ENCODE measurements at regions of chr5 and their contacts with region 1.

Region 1: GRCh38 chr5:99032234-99033013 is 103.6 kb upstream of the CHD1 start:
- DNase-seq: peak; percentile 80
- H3K4me3 ChIP-seq: peak overlapping the region; percentile 33
- H3K27ac ChIP-seq: no peak overlapping the region
- H3K4me1 ChIP-seq: peaks cover 4% of the 10 kb centered on the region
- H3K27me3 ChIP-seq: no peaks in the 10 kb centered on the region
- CTCF ChIP-seq: peak; percentile 80

Region 2: DNA sequence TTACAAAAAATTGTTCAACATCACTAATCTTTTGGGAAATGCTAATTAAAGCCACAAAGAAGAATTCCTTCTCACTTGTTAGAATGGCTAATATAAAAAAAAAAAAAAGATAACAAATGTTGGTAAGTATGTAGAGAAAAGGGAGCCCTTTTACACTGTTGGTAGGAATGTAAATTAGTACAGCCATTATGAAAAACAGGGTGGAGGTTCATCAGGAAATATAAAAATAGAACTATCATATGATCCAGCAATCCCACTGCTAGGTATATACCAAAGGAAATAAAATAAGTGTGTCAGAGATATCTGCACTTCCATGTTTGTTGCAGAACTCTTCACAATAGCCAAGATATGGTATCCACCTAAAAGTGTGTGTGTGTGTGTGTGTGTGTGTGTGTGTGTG is 342.4 kb before region 1 on chr5:
- CTCF ChIA-PET with region 1: no interaction called
- POLR2A ChIA-PET with region 1: no interaction called
- intact Hi-C with region 1: no loop called
- DNase-seq: no peak
- H3K4me3 ChIP-seq: no peak overlapping the region
- H3K27ac ChIP-seq: no peak overlapping the region
- H3K4me1 ChIP-seq: no peaks in the 10 kb centered on the region
- H3K27me3 ChIP-seq: no peaks in the 10 kb centered on the region
- CTCF ChIP-seq: no peak

Region 3: GRCh38 chr5:98816582-98817222 is 215.7 kb before region 1 on chr5:
- CTCF ChIA-PET with region 1: no interaction called
- POLR2A ChIA-PET with region 1: no interaction called
- intact Hi-C with region 1: no loop called
- DNase-seq: no peak
- H3K4me3 ChIP-seq: no peak overlapping the region
- H3K27ac ChIP-seq: no peak overlapping the region
- H3K4me1 ChIP-seq: no peaks in the 10 kb centered on the region
- H3K27me3 ChIP-seq: no peaks in the 10 kb centered on the region
- CTCF ChIP-seq: no peak

Region 4: DNA sequence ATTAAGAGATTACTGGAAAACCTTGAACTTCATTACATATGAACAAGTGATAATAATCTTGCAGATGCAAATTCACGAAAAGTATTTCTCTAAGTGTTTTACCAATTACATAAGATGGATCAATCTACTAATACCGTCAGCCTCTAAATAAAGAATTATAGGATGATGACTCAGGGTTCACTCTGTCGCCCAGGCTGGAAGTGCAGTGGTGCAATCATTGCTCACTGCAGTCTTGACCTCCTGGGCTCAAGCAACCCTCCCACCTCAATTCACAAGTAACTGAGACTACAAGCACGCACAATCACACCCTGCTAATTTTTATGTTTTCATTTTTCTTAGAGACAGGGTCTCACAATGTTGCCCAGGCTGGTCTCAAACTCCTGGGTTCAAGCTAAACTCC is 159.8 kb before region 1 on chr5:
- CTCF ChIA-PET with region 1: no interaction called
- POLR2A ChIA-PET with region 1: no interaction called
- intact Hi-C with region 1: no loop called
- DNase-seq: no peak
- H3K4me3 ChIP-seq: no peak overlapping the region
- H3K27ac ChIP-seq: no peak overlapping the region
- H3K4me1 ChIP-seq: no peaks in the 10 kb centered on the region
- H3K27me3 ChIP-seq: no peaks in the 10 kb centered on the region
- CTCF ChIP-seq: no peak

Region 5: GRCh38 chr5:98905857-98906690 is 126.3 kb before region 1 on chr5:
- CTCF ChIA-PET with region 1: interaction called, 3 read pairs
- POLR2A ChIA-PET with region 1: no interaction called
- intact Hi-C with region 1: loop called (anchors 1 kb)
- DNase-seq: peak; percentile 69
- H3K4me3 ChIP-seq: no peak overlapping the region
- H3K27ac ChIP-seq: no peak overlapping the region
- H3K4me1 ChIP-seq: peaks cover 25% of the 10 kb centered on the region
- H3K27me3 ChIP-seq: no peaks in the 10 kb centered on the region
- CTCF ChIP-seq: peak; percentile 76

Region 6: DNA sequence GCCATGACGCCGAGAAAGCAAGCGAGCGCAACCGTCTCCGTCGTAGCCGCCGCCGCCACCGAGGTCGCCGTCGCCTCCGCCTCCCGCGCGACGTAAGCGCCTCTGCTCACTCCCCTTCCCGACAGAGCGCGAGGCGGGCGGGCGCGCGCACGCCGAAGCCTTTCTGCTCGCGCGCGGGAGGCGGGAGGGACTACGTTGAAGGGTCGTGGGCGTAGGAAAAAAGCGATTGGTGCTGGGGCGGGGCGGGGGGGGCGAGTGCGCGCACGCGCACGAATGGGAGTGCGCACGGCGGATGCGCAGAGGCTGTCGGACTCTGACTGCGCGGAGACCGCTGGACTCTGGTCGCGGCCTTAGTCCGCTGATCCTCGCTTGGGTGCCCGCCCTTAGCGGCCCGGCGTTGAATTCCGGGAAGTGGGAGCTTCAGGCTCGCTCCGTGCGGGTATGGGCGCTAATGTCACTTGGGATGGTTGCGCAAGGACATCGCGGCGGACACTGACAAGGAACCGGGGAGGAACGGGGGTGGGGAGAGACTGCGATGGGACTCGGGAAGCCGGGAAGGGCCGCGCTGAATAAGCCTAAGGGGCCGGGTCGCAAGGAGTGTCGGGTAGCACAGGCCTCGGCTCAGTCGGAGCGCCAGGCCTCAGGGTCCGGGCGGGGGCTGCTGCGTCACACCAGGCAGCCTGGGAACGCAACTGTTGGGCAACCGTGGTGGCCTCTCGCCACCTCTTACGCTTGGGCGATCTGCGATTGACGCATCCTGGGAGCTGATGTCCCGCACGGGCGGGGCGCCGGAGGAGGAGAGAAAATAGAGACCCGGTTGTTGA is 103.3 kb before region 1 on chr5 and contains the start of gene CHD1:
- CTCF ChIA-PET with region 1: no interaction called
- POLR2A ChIA-PET with region 1: no interaction called
- intact Hi-C with region 1: loop called (anchors 5 kb)
- DNase-seq: peak; percentile 99
- H3K4me3 ChIP-seq: peak within 1 kb of the TSS; percentile 85
- H3K27ac ChIP-seq: peak within 1 kb of the TSS; percentile 97
- H3K4me1 ChIP-seq: peaks cover 15% of the 10 kb centered on the region
- H3K27me3 ChIP-seq: no peaks in the 10 kb centered on the region
- CTCF ChIP-seq: no peak
- total RNA-seq, gene CHD1: 57.8 and 61.0 TPM in 2 replicates